Transverse colon (tissue), 4 donors: ENCODE measurements at regions of chr13 and their contacts with region 1.

Region 1: DNA sequence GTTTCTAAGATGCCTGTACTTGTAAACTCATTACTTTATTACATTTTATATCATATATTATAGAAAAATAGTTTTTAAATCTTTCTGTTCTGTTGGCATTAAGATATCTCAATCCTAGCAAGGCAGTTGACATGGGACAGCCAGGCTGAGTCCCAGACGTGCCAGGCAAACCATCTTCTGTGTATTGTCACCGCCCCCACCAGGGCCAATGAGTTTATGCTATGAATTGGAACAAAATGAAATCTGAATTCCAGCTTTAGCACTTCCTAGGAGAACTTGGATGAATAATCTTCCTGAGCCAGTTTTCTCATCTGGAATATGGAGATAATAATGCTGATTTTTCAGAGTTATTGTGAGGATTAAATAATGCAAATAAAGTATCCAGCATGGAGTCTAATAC is 79.9 kb upstream of the GSX1 start:
- DNase-seq: peak; percentile 16
- H3K4me3 ChIP-seq: no peak overlapping the region
- H3K27ac ChIP-seq: no peak overlapping the region
- H3K4me1 ChIP-seq: no peaks in the 10 kb centered on the region
- H3K27me3 ChIP-seq: no peaks in the 10 kb centered on the region
- CTCF ChIP-seq: peak in 2 of 5 experiments; percentile 27
- EP300 ChIP-seq: no peak
- POLR2A ChIP-seq: no peak

Region 2: DNA sequence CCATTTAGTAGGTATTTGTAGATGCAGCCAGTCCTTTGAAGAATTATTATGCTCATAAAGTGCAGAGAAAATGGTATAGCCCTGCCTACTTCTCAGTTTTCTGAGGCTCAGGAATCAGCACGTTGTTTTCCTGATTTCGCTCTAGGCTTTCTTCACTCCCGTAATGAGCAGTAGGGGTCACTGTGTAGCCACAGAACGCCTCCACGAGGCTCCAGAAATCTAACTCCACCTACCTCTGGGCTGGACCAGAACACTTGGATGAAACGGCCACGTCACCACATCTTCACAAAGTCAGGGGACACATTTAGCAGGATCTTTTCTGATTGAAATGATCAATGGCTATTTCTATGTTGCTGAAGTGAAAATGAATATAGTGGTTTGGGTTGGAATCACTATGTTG is 337.8 kb before region 1 on chr13:
- in situ Hi-C with region 1: loop called in 1 of 4 experiments (anchors 25 kb)
- intact Hi-C with region 1: no loop called
- DNase-seq: peak; percentile 77
- H3K4me3 ChIP-seq: no peak overlapping the region
- H3K27ac ChIP-seq: peak overlapping the region; percentile 28 to 56 (median 44)
- H3K4me1 ChIP-seq: peaks cover 0 to 24% (median 0%) of the 10 kb centered on the region in 4 donors
- H3K27me3 ChIP-seq: no peaks in the 10 kb centered on the region
- CTCF ChIP-seq: peak; percentile 61 to 83 (median 68)
- EP300 ChIP-seq: no peak
- POLR2A ChIP-seq: no peak